Activated B cell treated with CpG ODN at 0.5 μM for 24 hours (primary cell): ENCODE measurements at regions of chr4 and their contacts with region 1.

Region 1: DNA sequence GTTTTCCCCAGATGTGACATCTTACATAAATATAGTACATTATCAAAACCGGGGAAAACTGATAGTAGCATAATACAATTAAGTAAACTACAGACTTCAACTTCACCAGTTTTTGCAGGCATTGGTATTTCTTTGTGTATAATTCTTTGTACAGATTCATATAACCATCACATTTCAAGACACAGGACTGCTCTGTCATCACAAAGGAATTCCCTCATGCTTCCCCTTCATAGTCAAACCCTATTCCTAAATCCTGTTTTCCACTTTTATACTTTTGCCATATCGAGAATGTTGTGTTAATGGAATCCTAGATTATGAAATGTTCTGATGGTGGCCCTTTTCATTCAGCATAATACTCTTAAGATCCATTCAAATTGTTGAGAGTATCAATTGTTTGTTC is 36.0 kb downstream of the STIM2 start:
- DNase-seq: no peak
- ATAC-seq: no peak
- H3K4me3 Mint-ChIP-seq: no peak overlapping the region
- H3K27ac Mint-ChIP-seq: no peak overlapping the region
- H3K4me1 Mint-ChIP-seq: peaks cover 77% of the 10 kb centered on the region
- H3K27me3 Mint-ChIP-seq: no peaks in the 10 kb centered on the region
- CTCF ChIP-seq: no peak

Region 2: DNA sequence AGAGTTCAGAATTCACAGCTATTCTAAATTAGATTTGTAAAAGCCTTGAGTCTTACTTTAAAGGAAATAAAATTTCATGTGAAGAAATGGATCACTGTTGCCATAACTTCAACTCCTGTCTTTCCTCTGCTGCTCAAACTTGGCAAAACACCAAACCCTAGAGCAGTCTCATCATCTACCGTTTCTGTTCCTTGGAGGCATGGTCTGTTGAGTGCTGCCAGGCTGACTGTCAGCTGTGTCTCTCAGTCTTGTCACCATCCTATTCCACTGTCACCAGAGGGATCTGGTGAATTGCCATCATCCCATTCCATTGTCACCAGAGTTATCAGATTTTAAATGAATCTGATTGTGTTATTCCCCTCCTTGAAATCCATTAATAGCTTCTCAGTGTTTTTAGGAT is 19.6 kb after region 1 on chr4:
- CTCF ChIA-PET with region 1: no interaction called
- POLR2A ChIA-PET with region 1: no interaction called
- intact Hi-C with region 1: loop called (anchors 2 kb)
- DNase-seq: no peak
- ATAC-seq: peak; percentile 49
- H3K4me3 Mint-ChIP-seq: no peak overlapping the region
- H3K27ac Mint-ChIP-seq: peak overlapping the region; percentile 31
- H3K4me1 Mint-ChIP-seq: peaks cover 55% of the 10 kb centered on the region
- H3K27me3 Mint-ChIP-seq: no peaks in the 10 kb centered on the region
- CTCF ChIP-seq: no peak